Psoas muscle (tissue), 8 donors: ENCODE measurements at regions of chr22 and their contacts with region 1.

Region 1: GRCh38 chr22:38614332-38615063 is 41.7 kb downstream of the FAM227A start:
- DNase-seq: no peak
- ATAC-seq: peak; percentile 77 to 89 (median 88)
- H3K4me3 ChIP-seq: no peak overlapping the region
- H3K27ac ChIP-seq: peak overlapping the region; percentile 73
- H3K4me1 ChIP-seq: no peaks in the 10 kb centered on the region
- H3K27me3 ChIP-seq: no peaks in the 10 kb centered on the region
- CTCF ChIP-seq: no peak

Region 2: DNA sequence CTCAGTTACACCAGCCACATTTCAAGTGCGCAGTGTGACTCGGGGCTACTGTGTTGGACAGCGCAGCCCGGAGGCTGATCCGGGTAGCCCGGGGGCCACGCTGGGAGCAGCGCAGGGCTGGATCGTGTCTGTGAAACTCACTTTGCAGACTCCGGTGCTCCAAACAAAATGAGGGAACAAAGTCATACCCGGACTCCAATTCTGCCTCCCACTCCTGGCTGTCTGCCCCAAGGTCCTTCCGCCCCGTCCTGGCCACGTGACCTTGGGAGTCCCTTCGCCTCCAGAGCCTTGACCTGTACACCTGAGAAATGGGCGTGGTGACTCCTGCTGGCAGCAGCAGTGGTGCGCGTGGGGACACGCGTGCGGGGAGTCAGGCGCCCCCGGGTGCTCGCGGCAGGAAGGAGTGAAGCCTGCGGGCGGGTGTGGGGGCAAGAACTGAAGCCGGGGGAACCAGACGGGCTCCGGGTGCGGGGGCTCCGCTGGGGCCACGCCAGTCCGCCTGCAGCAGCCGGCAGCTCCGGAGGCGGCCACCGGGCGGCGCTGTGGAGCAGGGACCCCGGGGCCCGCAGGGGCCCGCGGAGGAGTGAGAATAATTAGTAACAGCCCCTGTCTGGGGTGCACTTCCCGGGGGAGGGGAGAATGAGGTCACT is 201.9 kb before region 1 on chr22:
- intact Hi-C with region 1: no loop called
- DNase-seq: peak in 1 of 2 donors; percentile 50
- ATAC-seq: peak; percentile 48 to 74 (median 58)
- H3K4me3 ChIP-seq: peak overlapping the region; percentile 50
- H3K27ac ChIP-seq: no peak overlapping the region
- H3K4me1 ChIP-seq: peaks cover 14% of the 10 kb centered on the region
- H3K27me3 ChIP-seq: no peaks in the 10 kb centered on the region
- CTCF ChIP-seq: peak; percentile 64

Region 3: DNA sequence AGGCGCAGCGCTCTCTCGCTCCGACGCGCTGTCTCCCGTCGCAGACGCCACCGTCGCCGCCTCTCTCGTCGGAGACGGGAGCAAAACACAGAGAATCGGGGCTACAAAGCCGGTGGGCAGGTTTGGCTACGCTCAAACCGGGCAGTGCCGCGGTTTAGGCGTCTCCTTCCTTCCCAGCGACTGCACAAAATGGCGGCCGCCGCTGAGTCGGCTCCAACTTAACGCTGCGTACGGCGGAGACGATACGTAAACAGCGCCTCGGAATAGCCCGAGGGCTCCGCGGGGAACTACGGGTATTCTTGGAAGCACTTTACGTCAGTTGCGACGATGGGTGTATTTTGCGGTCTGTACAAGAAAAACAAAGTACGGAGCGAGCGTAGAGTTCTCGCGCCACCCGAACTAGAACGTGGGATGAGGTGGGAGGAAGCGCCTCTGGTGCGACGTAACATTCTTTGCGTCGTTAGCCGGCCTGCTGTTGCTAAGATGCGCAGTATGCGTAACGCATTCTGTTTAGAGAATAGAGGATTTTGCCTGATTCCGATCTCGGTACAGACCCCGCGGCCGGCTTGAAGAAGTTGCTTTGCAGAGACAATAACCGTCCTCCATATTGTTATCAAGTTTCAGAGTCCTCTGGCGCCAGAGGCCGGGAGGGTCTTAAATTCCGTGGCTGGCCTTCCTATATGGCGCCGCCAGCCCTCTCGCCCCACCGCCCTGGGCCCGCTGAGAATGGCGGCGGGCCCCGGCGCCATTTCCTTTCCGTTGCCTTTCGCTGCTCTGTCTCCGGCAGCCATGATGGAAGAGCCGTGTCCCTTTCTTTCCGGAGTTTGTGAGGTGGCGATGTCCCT is 108.2 kb before region 1 on chr22 and contains the start of gene DDX17:
- intact Hi-C with region 1: no loop called
- DNase-seq: peak; percentile 91 to 95
- ATAC-seq: peak; percentile 85 to 89 (median 86)
- H3K4me3 ChIP-seq: peak within 1 kb of the TSS; percentile 87
- H3K27ac ChIP-seq: peak within 1 kb of the TSS; percentile 100
- H3K4me1 ChIP-seq: peaks cover 37% of the 10 kb centered on the region
- H3K27me3 ChIP-seq: no peaks in the 10 kb centered on the region
- CTCF ChIP-seq: no peak
- total RNA-seq, gene DDX17: 127 to 173 (median 150) TPM

Region 4: GRCh38 chr22:38674888-38675287 is 60.4 kb after region 1 on chr22:
- intact Hi-C with region 1: loop called in 1 of 2 experiments (anchors 5 kb)
- DNase-seq: no peak
- ATAC-seq: peak in 1 of 4 donors; percentile 17
- H3K4me3 ChIP-seq: no peak overlapping the region
- H3K27ac ChIP-seq: no peak overlapping the region
- H3K4me1 ChIP-seq: no peaks in the 10 kb centered on the region
- H3K27me3 ChIP-seq: no peaks in the 10 kb centered on the region
- CTCF ChIP-seq: no peak